Activated CD4-positive, alpha-beta T cell treated with anti-CD3 and anti-CD28 coated beads for 36 hours (primary cell): ENCODE measurements at regions of chr7 and their contacts with region 1.

Region 1: DNA sequence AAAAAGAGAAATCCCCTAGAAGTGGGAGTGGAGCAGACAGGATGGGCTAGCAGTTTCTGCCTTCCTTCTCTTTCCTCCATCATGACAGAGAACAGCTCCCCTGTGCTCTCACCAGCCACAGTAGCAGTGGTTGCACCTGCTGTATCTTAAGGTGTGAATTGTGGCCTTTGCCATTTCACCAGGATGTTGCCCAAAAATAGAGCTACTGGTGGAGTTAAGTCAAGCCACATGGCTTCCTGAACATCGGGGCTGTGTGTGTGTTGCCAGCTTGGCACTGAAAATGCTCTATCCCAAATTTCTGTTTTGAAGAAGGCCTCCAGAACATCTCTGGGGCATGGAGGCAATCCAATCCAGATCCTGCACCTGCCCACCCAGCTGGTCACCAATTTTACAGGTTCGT is 348.7 kb downstream of the EXOC4 start:
- DNase-seq: no peak
- ATAC-seq: no peak
- H3K4me3 Mint-ChIP-seq: no peak overlapping the region
- H3K27ac Mint-ChIP-seq: no peak overlapping the region
- H3K4me1 Mint-ChIP-seq: no peaks in the 10 kb centered on the region
- H3K27me3 Mint-ChIP-seq: no peaks in the 10 kb centered on the region

Region 2: GRCh38 chr7:133560900-133561299 is 40.7 kb before region 1 on chr7:
- CTCF ChIA-PET with region 1: no interaction called
- POLR2A ChIA-PET with region 1: no interaction called
- intact Hi-C with region 1: no loop called
- DNase-seq: no peak
- ATAC-seq: peak; percentile 88
- H3K4me3 Mint-ChIP-seq: no peak overlapping the region
- H3K27ac Mint-ChIP-seq: no peak overlapping the region
- H3K4me1 Mint-ChIP-seq: no peaks in the 10 kb centered on the region
- H3K27me3 Mint-ChIP-seq: no peaks in the 10 kb centered on the region

Region 3: GRCh38 chr7:133582766-133583523 is 18.7 kb before region 1 on chr7:
- CTCF ChIA-PET with region 1: no interaction called
- POLR2A ChIA-PET with region 1: no interaction called
- intact Hi-C with region 1: no loop called
- DNase-seq: no peak
- ATAC-seq: no peak
- H3K4me3 Mint-ChIP-seq: no peak overlapping the region
- H3K27ac Mint-ChIP-seq: no peak overlapping the region
- H3K4me1 Mint-ChIP-seq: peaks cover 6% of the 10 kb centered on the region
- H3K27me3 Mint-ChIP-seq: no peaks in the 10 kb centered on the region

Region 4: GRCh38 chr7:133623721-133624120 is 22.1 kb after region 1 on chr7:
- CTCF ChIA-PET with region 1: no interaction called
- POLR2A ChIA-PET with region 1: interaction called, 13 read pairs
- intact Hi-C with region 1: no loop called
- DNase-seq: no peak
- ATAC-seq: no peak
- H3K4me3 Mint-ChIP-seq: no peak overlapping the region
- H3K27ac Mint-ChIP-seq: no peak overlapping the region
- H3K4me1 Mint-ChIP-seq: no peaks in the 10 kb centered on the region
- H3K27me3 Mint-ChIP-seq: no peaks in the 10 kb centered on the region

Region 5: GRCh38 chr7:133668296-133669060 is 66.9 kb after region 1 on chr7:
- CTCF ChIA-PET with region 1: no interaction called
- POLR2A ChIA-PET with region 1: no interaction called
- intact Hi-C with region 1: no loop called
- DNase-seq: no peak
- ATAC-seq: no peak
- H3K4me3 Mint-ChIP-seq: no peak overlapping the region
- H3K27ac Mint-ChIP-seq: no peak overlapping the region
- H3K4me1 Mint-ChIP-seq: no peaks in the 10 kb centered on the region
- H3K27me3 Mint-ChIP-seq: no peaks in the 10 kb centered on the region